OCI-LY7 (cell line): ENCODE measurements at regions of chr3 and their contacts with region 1.

Region 1: GRCh38 chr3:187066228-187066995 is 72.9 kb downstream of the RPL39L start:
- DNase-seq: peak; percentile 94
- H3K4me3 ChIP-seq: peak overlapping the region; percentile 63
- H3K27ac ChIP-seq: peak overlapping the region; percentile 99
- H3K4me1 ChIP-seq: peaks cover 97% of the 10 kb centered on the region
- CTCF ChIP-seq: peak; percentile 82

Region 2: GRCh38 chr3:186121968-186122367 is 944.4 kb before region 1 on chr3:
- CTCF ChIA-PET with region 1: no interaction called
- POLR2A ChIA-PET with region 1: no interaction called
- intact Hi-C with region 1: no loop called
- DNase-seq: no peak
- H3K4me3 ChIP-seq: no peak overlapping the region
- H3K27ac ChIP-seq: no peak overlapping the region
- H3K4me1 ChIP-seq: no peaks in the 10 kb centered on the region
- CTCF ChIP-seq: no peak

Region 3: DNA sequence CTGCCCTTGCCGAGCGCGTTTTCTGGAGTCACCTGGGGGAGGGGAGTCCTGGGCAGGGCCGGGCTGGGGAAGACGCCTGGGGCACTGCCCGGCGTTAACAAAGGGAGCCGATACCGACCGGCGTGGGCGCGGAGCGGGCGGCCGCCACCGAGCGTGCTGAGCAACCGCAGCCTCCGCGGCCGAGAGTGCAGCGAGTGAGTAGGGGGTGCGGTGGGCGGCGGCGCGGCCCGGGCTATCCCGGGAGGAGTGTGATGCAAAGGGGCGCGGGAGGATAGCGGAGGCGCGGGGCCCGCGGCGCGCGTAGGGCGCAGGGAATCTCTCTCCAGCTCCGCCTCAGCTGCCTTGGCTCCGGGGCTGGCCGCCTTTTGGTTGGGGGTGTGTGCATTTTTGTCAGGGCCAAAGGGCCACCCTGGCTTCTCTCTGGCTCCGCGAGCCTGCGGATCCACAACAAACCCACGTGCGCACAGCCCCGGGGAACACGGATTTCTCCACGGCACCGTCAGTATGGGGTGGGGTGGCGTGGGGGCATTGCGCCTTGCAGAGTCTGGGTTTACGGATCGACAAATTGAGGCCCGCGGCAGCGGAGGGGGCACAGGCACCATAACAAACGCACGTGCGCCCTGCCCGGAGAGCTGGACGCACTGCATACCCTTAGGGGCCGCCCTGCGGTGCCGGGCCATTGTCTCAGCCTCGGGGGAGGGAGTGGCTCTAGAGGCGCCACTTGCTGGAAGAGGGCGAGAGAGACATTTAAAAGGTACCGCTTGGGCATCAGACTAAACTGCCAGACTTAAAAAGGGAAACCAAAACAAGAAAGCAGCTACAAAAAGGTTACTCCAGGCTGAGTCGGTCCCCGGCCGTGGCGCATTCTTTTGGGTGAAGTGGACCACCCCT is 135.5 kb before region 1 on chr3:
- CTCF ChIA-PET with region 1: no interaction called
- POLR2A ChIA-PET with region 1: interaction called, 3 read pairs
- intact Hi-C with region 1: loop called (anchors 1 kb)
- DNase-seq: peak; percentile 88
- H3K4me3 ChIP-seq: peak overlapping the region; percentile 88
- H3K27ac ChIP-seq: peak overlapping the region; percentile 50
- H3K4me1 ChIP-seq: peaks cover 37% of the 10 kb centered on the region
- CTCF ChIP-seq: peak; percentile 67

Region 4: DNA sequence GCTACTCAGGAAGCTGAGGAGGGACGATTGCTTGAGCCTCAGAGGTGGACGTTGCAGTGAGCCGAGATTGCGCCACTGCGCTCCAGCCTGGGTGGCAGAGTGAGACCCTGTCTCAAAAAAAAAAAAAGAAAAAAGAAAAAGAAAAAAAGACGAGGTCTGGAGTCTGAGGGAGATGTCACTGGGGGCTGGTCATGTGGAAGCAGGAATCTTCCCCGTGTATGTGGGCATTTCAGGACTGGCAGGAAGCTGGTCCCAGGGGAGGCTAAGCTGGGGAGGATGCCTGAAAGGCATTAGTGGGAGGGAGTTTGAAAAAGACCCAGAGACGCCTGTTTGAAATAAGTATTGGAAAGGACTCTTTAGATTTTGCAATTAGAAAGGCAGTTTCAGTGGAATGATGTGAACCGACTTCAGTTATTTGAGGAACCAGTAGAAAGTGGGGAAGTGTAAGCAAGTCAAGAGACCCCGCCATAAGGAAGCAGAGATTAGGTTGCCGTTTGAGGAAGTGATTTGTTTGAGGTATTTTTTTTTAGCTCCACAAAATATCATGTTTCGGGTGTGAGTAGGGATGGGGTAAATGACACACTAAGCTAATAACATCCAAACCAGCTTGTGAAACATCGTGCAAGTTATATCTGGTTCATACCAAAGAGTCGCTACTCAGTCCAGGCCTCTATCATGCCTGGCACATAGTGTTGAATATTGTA is 80.6 kb before region 1 on chr3:
- CTCF ChIA-PET with region 1: interaction called, 4 read pairs
- POLR2A ChIA-PET with region 1: interaction called, 18 read pairs
- intact Hi-C with region 1: no loop called
- DNase-seq: peak; percentile 75
- H3K4me3 ChIP-seq: peak overlapping the region; percentile 54
- H3K27ac ChIP-seq: peak overlapping the region; percentile 98
- H3K4me1 ChIP-seq: peaks cover 75% of the 10 kb centered on the region
- CTCF ChIP-seq: no peak

Region 5: DNA sequence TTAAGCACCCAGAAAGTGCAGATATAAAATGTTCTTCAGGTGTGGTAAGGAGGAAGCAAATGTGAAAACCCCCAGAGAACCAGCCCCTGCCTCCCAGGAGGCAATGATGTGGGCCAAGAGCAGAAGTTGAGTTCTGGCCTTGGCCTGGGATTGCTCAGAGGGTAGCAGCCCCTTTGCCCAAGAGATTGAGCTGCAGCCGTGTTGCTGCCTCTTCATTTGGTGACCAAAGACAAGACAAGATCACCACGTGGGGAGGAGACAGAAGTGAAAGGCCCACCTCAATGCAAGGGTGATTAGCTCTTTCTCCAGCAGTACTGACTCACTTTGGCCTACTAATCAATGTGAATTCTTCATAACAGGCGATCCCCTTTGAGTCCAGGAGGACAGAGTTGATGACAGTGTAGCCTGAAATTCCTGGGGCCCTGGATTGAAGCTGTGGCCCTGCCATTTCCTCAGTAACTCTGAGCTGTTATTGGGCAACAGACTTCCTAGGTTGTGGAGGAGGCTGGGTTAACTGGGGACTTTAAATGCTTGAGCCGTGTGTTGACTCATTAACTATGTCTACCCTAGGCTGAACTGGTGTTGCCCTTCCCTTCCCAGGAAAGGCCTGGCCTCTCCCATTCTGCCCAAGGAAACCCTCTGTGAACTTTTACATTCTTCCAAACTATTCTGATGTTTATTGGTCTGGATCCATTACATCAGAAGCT is 49.6 kb before region 1 on chr3:
- CTCF ChIA-PET with region 1: interaction called, 4 read pairs
- POLR2A ChIA-PET with region 1: interaction called, 22 read pairs
- intact Hi-C with region 1: no loop called
- DNase-seq: peak; percentile 69
- H3K4me3 ChIP-seq: peak overlapping the region; percentile 42
- H3K27ac ChIP-seq: peak overlapping the region; percentile 98
- H3K4me1 ChIP-seq: peaks cover 96% of the 10 kb centered on the region
- CTCF ChIP-seq: no peak

Region 6: DNA sequence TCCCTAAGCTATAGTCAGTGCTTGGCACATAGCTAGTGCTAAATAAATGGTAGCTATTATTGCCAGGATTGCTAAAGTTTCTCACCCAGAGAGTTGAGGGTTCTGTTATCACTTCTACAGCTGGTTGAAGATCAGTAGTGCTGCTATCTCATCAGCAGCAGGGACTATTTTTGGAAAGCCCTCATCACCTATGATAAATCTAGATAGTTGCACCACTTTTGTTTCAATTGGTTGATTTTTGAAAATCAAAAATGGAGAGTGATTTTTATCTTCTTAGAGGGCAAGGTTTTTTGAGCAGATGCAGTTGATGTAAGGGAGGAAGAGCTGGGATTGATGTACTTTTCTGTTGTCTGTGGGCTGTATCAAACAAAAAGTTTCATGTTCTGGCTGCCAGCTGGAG is 34.5 kb before region 1 on chr3:
- CTCF ChIA-PET with region 1: interaction called, 5 read pairs
- POLR2A ChIA-PET with region 1: interaction called, 122 read pairs
- intact Hi-C with region 1: no loop called
- DNase-seq: no peak
- H3K4me3 ChIP-seq: peak overlapping the region; percentile 42
- H3K27ac ChIP-seq: peak overlapping the region; percentile 98
- H3K4me1 ChIP-seq: peaks cover 62% of the 10 kb centered on the region
- CTCF ChIP-seq: no peak